OCI-LY7 (cell line): ENCODE measurements at regions of chr3 and their contacts with region 1.

Region 1: GRCh38 chr3:156151824-156152428 is 31.5 kb downstream of the KCNAB1 start:
- DNase-seq: peak; percentile 51
- H3K4me3 ChIP-seq: no peak overlapping the region
- H3K27ac ChIP-seq: no peak overlapping the region
- H3K4me1 ChIP-seq: no peaks in the 10 kb centered on the region
- CTCF ChIP-seq: peak; percentile 91

Region 2: DNA sequence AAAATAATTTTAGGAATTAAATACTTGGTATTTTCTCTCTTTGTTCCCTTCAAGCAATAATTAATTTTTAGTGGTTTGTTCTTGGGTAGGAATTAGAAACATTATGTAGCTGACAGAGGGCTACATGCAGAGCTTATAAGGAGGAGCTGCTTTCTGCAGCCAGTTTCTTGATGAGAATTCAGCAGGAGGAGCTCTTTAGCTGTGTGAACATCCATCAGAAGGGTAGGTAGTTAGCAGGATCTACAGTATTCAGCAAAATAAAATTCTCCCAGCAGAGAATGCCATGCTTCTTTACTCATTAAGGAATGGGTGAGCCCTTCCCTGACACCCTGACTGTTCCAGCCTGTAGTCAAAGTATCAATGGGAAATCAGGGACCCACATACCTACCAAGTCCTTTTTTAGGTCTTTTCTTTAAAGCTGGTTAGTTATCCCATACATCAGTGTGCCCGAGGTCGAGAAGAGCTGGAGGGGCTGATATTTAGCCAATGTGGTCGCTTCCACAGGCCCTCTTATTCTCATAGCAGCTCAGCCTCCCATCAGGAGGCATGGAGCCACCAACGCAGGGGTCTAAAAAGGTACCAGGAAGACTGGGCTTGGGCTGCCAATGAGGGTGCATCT is 22.4 kb after region 1 on chr3:
- CTCF ChIA-PET with region 1: no interaction called
- POLR2A ChIA-PET with region 1: no interaction called
- intact Hi-C with region 1: no loop called
- DNase-seq: no peak
- H3K4me3 ChIP-seq: no peak overlapping the region
- H3K27ac ChIP-seq: no peak overlapping the region
- H3K4me1 ChIP-seq: no peaks in the 10 kb centered on the region
- CTCF ChIP-seq: no peak

Region 3: DNA sequence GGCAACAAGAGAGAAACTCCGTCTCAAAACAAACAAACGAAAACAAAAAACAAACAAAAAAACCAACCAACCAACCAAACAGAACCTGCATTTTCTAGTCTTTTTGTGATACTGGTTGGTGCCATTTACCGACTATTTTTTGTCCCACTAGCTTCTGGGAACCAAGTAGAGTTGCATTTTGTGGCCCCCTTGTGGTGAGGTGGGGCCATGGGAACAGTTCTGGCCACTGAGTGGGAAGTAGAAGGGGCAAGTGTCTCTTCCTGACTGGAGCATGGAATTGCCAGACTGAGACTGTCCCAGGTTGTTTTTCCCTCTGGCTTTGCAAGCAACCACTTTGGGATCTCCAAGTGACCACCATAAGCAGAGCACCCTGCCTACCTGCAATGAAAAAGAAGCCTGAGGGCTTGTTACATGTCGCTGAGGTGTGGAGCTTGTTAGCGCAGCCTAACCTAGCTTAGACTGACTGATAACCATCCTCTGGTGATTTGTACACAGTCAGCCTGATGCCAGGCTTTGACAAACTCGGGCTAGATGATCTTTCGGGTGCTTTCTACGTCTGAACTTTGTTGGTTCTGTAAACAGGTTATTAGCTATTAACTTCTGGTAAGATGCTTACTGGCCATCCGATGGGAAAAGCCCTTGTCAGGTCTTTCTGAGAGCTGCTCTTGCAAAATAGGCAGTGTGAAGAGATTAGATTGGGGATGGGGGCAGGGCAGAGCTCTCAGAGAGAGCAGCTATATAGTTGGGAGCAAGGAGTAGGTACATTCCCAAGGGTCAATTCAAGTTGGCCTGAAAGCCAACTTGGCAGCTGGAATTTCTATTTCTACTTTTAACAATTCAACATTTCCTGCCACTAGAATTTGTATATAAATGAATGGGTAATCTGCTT is 230.8 kb after region 1 on chr3:
- CTCF ChIA-PET with region 1: no interaction called
- POLR2A ChIA-PET with region 1: no interaction called
- intact Hi-C with region 1: loop called (anchors 1 kb)
- DNase-seq: peak; percentile 26
- H3K4me3 ChIP-seq: no peak overlapping the region
- H3K27ac ChIP-seq: no peak overlapping the region
- H3K4me1 ChIP-seq: no peaks in the 10 kb centered on the region
- CTCF ChIP-seq: peak; percentile 77

Region 4: DNA sequence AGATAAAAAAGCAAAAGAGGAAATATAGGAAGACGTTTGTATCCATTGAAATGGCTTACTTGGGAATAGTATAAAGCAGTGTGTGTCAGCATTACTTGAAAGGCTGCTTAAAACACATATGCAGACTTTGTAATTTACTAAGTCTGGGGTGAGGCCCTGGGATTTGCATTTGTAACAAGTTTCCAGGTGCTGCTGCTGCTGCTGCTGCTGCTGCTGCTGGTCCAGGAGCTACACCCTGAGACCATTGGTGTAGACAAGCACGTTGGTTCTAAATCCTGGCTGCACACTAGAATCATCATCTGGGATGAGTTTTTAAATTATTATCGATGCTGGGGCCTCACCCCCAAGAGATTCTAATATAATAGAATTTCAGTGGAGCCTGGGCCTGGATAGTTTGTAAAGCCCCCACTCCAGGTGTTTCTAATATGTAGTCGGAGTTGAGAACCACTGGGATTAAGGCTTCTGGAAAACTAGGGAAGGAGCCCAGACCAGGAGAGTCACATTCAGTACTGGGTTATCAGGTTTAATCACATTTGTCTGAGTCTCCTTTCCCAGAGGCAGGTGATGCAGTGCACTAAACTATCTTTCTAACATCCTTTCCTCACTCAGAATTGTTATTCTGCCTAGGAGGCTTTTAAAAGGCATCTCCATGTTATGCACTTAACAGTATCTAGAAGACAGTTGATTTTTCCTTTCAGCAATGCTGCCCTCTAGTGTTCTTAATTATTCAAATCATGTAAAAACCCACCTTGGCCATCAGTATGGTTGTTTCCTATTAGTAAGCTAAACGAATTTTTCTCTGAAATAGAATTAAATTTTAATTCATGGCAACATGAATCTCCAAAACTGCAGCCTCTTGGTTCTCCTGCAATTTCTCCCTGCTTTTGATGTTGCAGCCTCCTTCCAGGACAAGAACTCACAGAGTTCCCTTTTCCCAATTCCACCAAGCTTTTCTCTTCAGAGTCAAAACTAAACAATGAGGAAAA is 357.6 kb after region 1 on chr3:
- CTCF ChIA-PET with region 1: no interaction called
- POLR2A ChIA-PET with region 1: no interaction called
- intact Hi-C with region 1: loop called (anchors 1 kb)
- DNase-seq: peak; percentile 69
- H3K4me3 ChIP-seq: no peak overlapping the region
- H3K27ac ChIP-seq: no peak overlapping the region
- H3K4me1 ChIP-seq: peaks cover 7% of the 10 kb centered on the region
- CTCF ChIP-seq: peak; percentile 82

Region 5: DNA sequence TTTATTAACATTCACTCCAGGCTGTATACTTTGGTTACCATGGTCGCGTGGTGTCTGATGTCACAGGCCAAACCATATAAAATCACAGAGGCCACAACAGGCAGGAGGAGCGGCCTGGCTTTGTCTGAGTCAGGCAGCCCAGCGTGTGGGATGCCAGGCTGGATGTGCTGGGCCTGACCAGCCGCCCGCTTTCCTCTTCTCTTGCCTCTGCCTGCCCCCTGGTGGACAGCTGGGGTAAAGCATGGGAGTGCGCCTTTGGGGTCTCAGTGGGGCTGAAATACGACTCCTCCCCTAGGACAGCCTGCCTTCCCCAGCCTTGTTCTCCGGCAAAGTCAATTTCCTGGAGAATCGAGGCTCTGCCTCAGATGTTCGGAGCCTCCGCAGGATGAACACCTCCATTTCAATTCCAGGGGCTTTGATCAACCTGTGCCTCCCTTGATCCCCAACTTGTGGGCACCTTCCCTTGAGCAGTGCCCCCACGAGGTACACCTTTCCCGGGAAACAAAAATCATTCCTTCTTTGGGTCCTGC is 929.8 kb after region 1 on chr3:
- CTCF ChIA-PET with region 1: no interaction called
- POLR2A ChIA-PET with region 1: interaction called, 3 read pairs
- intact Hi-C with region 1: loop called (anchors 2 kb)
- DNase-seq: peak; percentile 79
- H3K4me3 ChIP-seq: no peak overlapping the region
- H3K27ac ChIP-seq: no peak overlapping the region
- H3K4me1 ChIP-seq: peaks cover 3% of the 10 kb centered on the region
- CTCF ChIP-seq: peak; percentile 96

Region 6: DNA sequence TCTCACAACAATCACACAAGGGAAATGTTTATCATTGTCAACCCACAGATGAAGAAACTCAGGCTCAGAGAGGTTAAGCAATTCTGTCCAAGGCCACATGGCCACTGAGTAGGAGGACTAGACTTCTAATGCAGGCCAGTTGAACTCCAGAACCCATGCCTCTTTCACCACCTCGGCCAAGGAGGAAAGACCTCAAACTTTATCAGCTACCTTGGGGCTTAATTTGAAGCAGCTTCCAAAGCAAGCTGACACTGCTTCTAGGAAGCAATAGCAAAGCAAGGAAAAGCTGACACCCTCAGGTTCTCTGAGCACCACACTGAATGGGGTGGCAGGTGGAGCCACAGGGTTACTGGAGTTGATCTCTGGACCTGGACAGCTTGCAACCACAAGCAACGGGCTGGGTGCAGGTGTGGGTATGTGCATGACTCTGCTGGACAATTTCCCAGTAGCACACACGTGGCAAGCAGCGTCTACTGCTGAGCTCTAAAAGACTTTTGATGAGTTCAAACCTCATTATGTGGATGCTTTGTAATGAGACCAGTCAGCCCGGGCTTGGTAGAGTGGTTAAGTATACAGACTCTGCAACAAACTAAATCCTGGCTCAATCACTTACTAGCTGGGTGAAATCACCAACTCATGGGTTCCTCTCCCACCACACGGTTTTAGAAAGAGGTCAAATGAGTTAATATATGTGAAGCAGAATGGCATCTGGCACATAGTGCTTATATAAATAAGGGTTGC is 984.9 kb after region 1 on chr3:
- CTCF ChIA-PET with region 1: no interaction called
- POLR2A ChIA-PET with region 1: no interaction called
- intact Hi-C with region 1: loop called (anchors 2 kb)
- DNase-seq: no peak
- H3K4me3 ChIP-seq: no peak overlapping the region
- H3K27ac ChIP-seq: no peak overlapping the region
- H3K4me1 ChIP-seq: peaks cover 11% of the 10 kb centered on the region
- CTCF ChIP-seq: no peak

Region 7: DNA sequence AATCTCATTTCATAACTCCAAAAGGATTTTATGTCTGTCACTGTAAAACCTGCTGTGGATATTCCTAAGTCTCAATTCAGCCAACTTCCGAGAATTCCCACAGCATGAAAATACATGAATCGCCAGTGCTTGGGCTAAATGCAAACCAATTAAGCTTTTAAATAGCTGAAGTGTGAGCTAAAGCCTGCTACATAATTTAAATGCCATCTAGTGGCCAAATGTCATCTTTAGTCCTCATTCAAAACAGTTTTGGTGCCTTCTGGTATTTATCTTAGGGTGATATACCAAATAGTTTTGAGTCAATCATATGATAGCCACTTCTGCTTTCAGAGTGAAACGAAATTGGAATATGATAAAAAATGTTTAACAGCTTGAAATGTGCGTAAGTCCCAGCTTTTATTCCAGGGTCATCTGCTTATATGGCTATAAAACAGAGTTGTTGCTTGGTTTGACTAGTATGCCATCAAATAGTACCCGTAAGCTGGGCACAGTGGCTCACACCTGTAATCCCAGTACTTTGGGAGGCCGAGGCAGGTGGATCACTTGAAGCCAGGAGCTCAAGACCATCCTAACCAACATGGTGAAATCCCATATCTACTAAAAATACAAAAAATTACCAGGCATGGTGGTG is 1049.8 kb after region 1 on chr3:
- CTCF ChIA-PET with region 1: no interaction called
- POLR2A ChIA-PET with region 1: no interaction called
- intact Hi-C with region 1: loop called (anchors 10 kb)
- DNase-seq: peak; percentile 60
- H3K4me3 ChIP-seq: no peak overlapping the region
- H3K27ac ChIP-seq: no peak overlapping the region
- H3K4me1 ChIP-seq: no peaks in the 10 kb centered on the region
- CTCF ChIP-seq: peak; percentile 83